ENCODE measurements at regions of chr3 and their contacts with region 1.

Region 1: DNA sequence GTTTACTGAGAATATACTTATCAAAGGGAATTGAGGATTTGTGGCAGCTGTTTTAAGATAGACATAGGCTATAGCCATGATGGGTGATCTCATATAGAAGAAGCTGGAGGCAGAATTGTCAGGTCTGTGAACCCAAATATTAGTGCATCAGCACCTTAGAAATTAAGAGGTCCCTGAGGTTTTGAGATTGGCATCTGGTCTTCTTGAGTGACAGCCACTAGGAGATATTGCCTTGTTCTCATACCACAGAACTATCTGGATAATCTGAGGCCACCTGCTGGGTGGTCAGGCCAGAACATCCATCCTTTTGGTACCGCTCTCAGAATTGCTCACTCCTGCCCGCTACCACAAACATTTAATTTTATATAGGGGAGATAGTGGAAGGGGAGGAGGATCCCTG is 210.7 kb upstream of the ZPLD1 start:
- DNase-seq: no peak
- ATAC-seq: no peak
- H3K4me3 ChIP-seq: no peak overlapping the region
- H3K27ac ChIP-seq: no peak overlapping the region
- H3K4me1 ChIP-seq: peaks cover 7% of the 10 kb centered on the region
- H3K27me3 ChIP-seq: no peaks in the 10 kb centered on the region
- CTCF ChIP-seq: peak in 3 of 7 experiments; percentile 14 to 33 (median 16)
- POLR2A ChIP-seq: no peak

Region 2: DNA sequence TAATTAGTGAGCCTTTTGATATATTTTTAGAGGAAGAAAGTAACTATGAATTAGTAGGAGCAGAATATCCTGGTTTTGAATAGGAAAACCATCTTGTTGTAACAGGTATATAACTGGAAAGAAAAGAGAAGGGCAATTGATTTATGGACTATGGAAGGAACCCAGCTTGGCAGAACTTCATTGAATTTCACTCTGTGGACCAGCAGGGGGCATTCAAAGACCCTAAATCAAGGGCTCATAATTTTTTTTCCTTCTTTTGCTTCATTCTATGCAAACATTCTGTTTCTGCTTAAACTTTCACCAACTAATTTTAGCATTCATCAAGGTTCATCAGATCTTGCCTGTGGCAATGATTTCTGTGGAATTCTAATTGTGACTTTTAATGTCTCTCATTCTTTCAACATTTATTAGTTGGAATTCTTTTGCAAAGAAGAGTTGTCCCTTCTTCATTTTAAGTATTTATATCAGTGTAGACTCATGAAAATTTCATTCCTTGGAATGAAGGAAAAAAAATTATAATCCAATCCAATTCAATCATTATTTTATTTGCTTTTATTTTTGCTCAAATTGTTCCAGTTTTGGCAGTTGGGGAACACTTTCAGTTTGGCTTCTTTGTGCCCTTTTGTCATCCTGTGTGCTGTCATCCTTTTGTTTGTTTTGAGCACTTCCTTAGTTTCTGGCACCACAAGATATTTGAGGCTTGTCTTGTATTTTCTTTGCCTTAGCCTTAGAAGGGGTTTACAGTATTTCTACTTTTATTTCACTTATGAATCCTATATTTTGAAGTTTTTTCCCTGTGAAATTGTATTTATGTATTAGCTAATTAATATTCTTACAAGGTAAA is 414.7 kb before region 1 on chr3:
- intact Hi-C with region 1: loop called (anchors 5 kb)
- DNase-seq: peak; percentile 43 to 54 (median 48)
- ATAC-seq: peak; percentile 75
- H3K4me3 ChIP-seq: no peak overlapping the region
- H3K27ac ChIP-seq: no peak overlapping the region
- H3K4me1 ChIP-seq: peaks cover 19% of the 10 kb centered on the region
- H3K27me3 ChIP-seq: no peaks in the 10 kb centered on the region
- CTCF ChIP-seq: peak; percentile 31 to 80 (median 74)
- POLR2A ChIP-seq: no peak